ENCODE measurements at regions of chr16 and their contacts with region 1.

Region 1: DNA sequence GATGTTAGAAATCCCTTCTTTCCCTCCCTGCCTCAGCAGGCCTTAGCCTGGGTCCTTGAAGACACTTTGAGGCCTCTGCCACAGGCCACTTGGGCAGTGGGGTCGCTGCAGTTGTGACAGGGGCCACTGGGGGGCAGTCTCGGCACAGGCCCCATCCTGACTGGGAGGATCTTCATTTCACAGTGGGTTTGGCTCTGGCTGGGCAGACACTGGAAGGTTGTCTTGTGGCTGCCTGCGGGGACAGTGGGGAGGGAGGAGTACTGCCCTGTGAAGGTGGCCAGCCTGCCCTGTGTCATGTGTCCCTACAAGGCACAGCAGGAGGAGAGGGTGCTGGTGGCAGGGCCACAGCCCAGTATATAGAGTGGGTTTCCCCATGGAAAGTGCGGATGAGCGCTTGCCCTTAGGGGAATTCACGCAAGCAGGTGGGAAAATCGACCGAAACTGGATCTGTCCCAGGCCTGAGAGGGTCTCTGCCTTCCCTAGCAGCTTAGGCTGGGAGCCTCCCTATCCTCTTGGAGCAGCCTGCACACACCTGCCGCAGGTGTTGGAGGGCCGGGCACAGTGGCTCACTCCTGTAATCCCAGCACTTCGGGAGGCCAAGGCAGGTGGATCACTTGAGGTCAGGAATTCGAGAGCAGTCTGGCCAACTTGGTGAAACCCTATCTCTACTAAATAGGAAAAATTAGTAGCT is 28.8 kb downstream of the GINS2 start:
- DNase-seq: peak; percentile 70
- H3K4me3 ChIP-seq: no peak overlapping the region
- H3K27ac ChIP-seq: no peak overlapping the region
- H3K4me1 ChIP-seq: no peaks in the 10 kb centered on the region
- H3K27me3 ChIP-seq: no peaks in the 10 kb centered on the region
- CTCF ChIP-seq: peak; percentile 96 to 98
- POLR2A ChIP-seq: no peak

Region 2: DNA sequence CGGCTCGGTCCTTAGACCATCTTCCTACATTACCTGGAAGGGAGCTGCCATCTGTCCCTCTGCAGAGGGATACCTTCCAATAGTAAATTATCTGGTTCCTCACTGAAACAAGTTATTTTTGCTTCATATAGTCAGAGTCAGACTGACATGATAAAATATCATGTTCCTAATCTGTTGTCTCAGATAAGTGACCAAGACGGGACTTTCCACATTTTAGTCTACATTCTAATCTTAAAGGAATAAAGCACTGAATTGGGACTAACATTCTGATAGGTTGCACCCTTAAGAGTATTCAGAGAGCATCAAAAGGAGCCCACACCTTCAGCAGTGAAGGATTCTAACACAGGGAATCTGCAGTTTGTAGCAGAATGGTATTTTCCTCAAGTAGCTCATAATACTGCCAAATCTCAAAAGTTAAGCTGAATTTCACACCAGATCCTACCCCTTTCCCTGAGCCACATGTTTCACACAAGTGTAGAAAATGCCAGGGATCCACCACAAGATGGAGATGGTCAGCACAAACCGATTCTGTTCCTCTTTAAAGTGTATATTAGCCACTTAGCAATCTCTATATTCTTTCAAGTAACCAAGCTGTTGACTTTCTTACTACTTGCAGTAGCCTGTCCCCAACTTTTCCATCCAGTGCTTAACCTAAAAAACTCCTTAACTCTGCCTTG is 15.4 kb after region 1 on chr16:
- CTCF ChIA-PET with region 1: interaction called, 17 read pairs
- POLR2A ChIA-PET with region 1: no interaction called
- dilution Hi-C with region 1: no loop called
- intact Hi-C with region 1: loop called (anchors 1 kb)
- DNase-seq: peak; percentile 41
- H3K4me3 ChIP-seq: no peak overlapping the region
- H3K27ac ChIP-seq: no peak overlapping the region
- H3K4me1 ChIP-seq: peaks cover 14% of the 10 kb centered on the region
- H3K27me3 ChIP-seq: no peaks in the 10 kb centered on the region
- CTCF ChIP-seq: peak; percentile 29 to 46
- POLR2A ChIP-seq: no peak

Region 3: GRCh38 chr16:85759631-85760419 is 99.9 kb after region 1 on chr16:
- CTCF ChIA-PET with region 1: interaction called, 14 read pairs
- POLR2A ChIA-PET with region 1: no interaction called
- dilution Hi-C with region 1: no loop called
- intact Hi-C with region 1: no loop called
- DNase-seq: no peak
- H3K4me3 ChIP-seq: no peak overlapping the region
- H3K27ac ChIP-seq: no peak overlapping the region
- H3K4me1 ChIP-seq: no peaks in the 10 kb centered on the region
- H3K27me3 ChIP-seq: no peaks in the 10 kb centered on the region
- CTCF ChIP-seq: peak; percentile 47 to 54
- POLR2A ChIP-seq: no peak